AG04449 (cell line): ENCODE measurements at regions of chr16 and their contacts with region 1.

Region 1: GRCh38 chr16:17467923-17468540 is 2.7 kb downstream of the XYLT1 start:
- DNase-seq: no peak
- H3K4me3 ChIP-seq: peak overlapping the region; percentile 84
- CTCF ChIP-seq: peak; percentile 93

Region 2: GRCh38 chr16:16861546-16861945 is 606.5 kb before region 1 on chr16:
- CTCF ChIA-PET with region 1: interaction called, 17 read pairs
- POLR2A ChIA-PET with region 1: no interaction called
- DNase-seq: peak; percentile 5
- H3K4me3 ChIP-seq: no peak overlapping the region
- CTCF ChIP-seq: peak; percentile 67

Region 3: DNA sequence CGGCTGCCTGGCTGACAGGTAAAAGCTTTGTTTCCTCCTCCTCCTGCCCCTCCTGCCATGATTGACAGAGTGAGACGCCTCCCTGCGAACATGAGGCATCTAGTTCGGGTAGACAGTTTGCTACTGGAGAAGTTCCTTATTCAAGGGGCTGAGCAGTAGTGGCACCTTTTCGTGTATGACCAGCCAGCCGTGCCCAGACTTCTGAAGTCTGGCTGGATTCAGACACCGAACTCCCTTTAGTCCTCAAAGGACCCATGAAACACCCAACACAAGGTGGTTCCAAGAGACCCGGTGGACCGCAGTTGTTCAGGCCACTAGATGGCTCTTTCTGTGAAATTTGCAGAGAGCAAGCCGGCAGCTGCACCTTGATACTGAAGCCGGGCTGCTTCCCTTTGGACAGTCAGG is 190.1 kb before region 1 on chr16:
- CTCF ChIA-PET with region 1: interaction called, 11 read pairs
- POLR2A ChIA-PET with region 1: no interaction called
- DNase-seq: no peak
- H3K4me3 ChIP-seq: no peak overlapping the region
- CTCF ChIP-seq: peak; percentile 30

Region 4: GRCh38 chr16:17416461-17417311 is 51.3 kb before region 1 on chr16:
- CTCF ChIA-PET with region 1: interaction called, 11 read pairs
- POLR2A ChIA-PET with region 1: no interaction called
- DNase-seq: no peak
- H3K4me3 ChIP-seq: no peak overlapping the region
- CTCF ChIP-seq: no peak

Region 5: DNA sequence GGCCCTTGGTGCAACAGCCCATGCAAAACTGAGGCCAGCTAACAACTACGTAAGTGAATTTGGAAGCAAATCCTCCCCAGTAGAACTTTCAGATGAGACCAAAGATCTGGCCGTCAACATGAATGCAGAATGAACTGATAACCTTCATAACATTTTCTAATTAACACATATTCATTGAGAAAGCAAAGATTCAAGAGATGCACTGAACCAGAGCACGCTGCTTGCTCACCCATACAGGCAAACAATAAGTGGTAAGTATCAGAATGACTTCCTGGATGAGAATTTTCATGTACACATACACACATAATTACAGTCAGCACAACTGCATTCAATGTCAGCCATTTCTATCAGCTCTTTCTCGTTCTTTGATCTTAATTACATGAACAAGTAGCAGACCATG is 27.9 kb before region 1 on chr16:
- CTCF ChIA-PET with region 1: no interaction called
- POLR2A ChIA-PET with region 1: no interaction called
- DNase-seq: no peak
- H3K4me3 ChIP-seq: no peak overlapping the region
- CTCF ChIP-seq: no peak

Region 6: DNA sequence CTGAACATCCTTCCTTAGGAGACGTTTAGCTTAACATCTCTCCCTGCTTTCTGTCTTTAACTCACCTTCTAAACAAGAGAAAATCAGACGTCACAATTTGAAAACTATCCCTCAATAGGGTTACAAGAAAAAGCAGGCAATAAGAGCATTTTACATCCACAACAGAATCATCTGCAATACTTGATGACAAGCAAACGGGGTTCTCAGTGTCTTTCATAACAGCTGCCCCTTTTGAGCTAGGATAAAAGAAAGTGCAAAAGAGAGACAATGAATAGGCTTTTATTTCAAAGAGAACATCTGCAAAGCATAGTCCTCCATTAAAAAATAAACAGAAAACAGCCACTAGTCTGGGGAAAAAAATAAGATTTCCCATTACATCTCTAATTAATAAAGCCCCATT is 10.5 kb before region 1 on chr16:
- CTCF ChIA-PET with region 1: interaction called, 14 read pairs
- POLR2A ChIA-PET with region 1: no interaction called
- DNase-seq: no peak
- H3K4me3 ChIP-seq: no peak overlapping the region
- CTCF ChIP-seq: no peak

Region 7: DNA sequence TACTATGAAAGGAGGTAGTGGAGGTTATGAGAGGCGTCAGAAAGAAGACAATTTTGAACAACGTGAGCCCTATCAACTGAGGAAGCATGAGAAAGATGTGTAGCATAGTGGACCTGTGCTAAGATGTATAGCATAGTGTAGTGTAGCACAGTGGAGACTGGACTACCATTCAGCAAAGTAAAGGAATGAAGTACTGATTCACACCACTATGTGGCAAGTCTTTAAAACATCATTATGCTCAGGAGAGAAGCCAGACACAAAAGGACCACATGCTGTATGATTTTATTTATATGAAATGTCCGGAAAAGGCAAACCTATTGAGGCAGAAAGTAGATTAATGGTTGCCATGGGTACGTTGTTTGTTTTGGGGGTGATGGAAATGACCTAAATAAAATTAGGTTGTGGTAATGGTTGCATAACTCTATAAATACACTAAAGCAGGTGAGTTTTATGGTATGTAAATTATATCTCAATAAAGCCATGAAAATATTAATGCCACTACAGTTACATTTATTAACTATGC is 23.2 kb after region 1 on chr16:
- CTCF ChIA-PET with region 1: no interaction called
- POLR2A ChIA-PET with region 1: no interaction called
- DNase-seq: no peak
- H3K4me3 ChIP-seq: no peak overlapping the region
- CTCF ChIP-seq: no peak